Colonic mucosa (tissue), 4 donors: ENCODE measurements at regions of chr2 and their contacts with region 1.

Region 1: GRCh38 chr2:191051825-191052778 is 38.1 kb upstream of the STAT1 start:
- DNase-seq: no peak
- H3K4me3 ChIP-seq: no peak overlapping the region
- H3K27ac ChIP-seq: no peak overlapping the region
- H3K4me1 ChIP-seq: no peaks in the 10 kb centered on the region
- H3K27me3 ChIP-seq: no peaks in the 10 kb centered on the region
- CTCF ChIP-seq: peak; percentile 65

Region 2: GRCh38 chr2:190947711-190948251 is 104.3 kb before region 1 on chr2:
- intact Hi-C with region 1: no loop called
- DNase-seq: no peak
- H3K4me3 ChIP-seq: no peak overlapping the region
- H3K27ac ChIP-seq: no peak overlapping the region
- H3K4me1 ChIP-seq: no peaks in the 10 kb centered on the region
- H3K27me3 ChIP-seq: no peaks in the 10 kb centered on the region
- CTCF ChIP-seq: no peak

Region 3: DNA sequence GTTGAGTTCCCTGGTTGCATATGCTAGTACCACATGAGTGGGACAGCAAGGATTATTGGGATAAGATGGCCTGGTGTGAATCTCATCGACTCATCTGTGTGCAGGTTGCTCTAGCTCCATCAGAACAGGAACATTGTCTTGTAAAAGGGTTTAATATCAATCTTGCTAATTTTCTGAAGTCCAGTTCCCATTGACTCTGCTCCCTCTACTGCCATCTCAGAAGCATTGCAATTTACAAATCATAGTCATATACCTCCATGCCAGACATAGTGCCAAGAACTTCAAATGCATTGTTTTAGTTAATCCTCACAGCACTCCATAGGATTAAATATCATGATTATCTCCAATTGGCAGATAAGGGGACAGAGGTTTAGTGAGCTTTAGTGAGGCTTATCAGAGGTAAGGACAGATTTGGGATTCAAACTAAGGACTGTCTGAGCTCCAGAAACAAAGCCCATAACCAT is 103.5 kb after region 1 on chr2:
- intact Hi-C with region 1: loop called (anchors 5 kb)
- DNase-seq: no peak
- H3K4me3 ChIP-seq: no peak overlapping the region
- H3K27ac ChIP-seq: no peak overlapping the region
- H3K4me1 ChIP-seq: no peaks in the 10 kb centered on the region
- H3K27me3 ChIP-seq: no peaks in the 10 kb centered on the region
- CTCF ChIP-seq: peak; percentile 61

Region 4: DNA sequence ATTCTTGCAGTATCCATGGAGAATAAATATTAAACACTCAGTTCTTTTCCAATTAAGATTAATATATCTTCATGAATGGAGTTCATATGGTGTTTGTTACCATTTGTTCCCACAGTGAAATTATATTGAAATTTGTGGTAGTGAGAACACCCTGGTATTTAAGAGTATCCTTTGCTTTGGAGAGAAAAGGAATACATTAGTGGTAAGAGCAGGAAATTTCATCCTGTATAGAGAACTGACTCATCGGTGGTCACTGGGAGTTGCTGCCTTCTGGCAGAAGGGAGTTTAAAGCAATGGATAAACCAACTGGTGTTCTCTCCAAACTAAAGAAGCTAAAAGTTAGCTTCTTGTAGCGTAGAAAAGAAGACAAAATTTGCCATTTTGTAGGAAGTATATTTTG is 300.4 kb after region 1 on chr2:
- intact Hi-C with region 1: no loop called
- DNase-seq: no peak
- H3K4me3 ChIP-seq: no peak overlapping the region
- H3K27ac ChIP-seq: no peak overlapping the region
- H3K4me1 ChIP-seq: no peaks in the 10 kb centered on the region
- H3K27me3 ChIP-seq: no peaks in the 10 kb centered on the region
- CTCF ChIP-seq: no peak

Region 5: DNA sequence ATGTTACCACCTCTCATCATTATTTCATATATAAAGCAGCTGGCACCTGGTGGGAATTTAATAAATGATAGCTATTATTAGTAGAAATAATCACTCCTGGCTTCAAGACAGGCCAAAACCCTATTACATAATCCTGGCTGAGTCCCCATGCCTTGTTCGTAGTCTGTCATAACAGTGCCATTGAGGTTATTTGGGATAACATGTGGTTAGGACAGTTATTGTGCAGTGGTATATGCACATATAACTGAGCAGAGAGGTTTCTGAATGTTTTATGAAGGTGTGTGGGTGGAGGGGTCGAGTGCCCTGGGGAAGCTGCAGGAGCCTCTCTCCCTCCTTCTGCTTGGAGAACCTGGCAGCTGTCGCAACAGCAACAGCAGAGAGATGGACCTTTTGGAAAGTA is 463.4 kb after region 1 on chr2:
- intact Hi-C with region 1: loop called (anchors 10 kb)
- DNase-seq: no peak
- H3K4me3 ChIP-seq: no peak overlapping the region
- H3K27ac ChIP-seq: no peak overlapping the region
- H3K4me1 ChIP-seq: no peaks in the 10 kb centered on the region
- H3K27me3 ChIP-seq: no peaks in the 10 kb centered on the region
- CTCF ChIP-seq: no peak